MCF 10A (cell line): ENCODE measurements at regions of chrX and their contacts with region 1.

Region 1: GRCh38 chrX:132740316-132741123 is 217.9 kb downstream of the HS6ST2 start:
- DNase-seq: peak; percentile 28
- H3K4me3 Mint-ChIP-seq: no peak overlapping the region
- H3K27ac Mint-ChIP-seq: no peak overlapping the region
- H3K4me1 Mint-ChIP-seq: peaks cover 6% of the 10 kb centered on the region
- H3K27me3 Mint-ChIP-seq: peaks cover 63% of the 10 kb centered on the region
- CTCF ChIP-seq: peak; percentile 83

Region 2: DNA sequence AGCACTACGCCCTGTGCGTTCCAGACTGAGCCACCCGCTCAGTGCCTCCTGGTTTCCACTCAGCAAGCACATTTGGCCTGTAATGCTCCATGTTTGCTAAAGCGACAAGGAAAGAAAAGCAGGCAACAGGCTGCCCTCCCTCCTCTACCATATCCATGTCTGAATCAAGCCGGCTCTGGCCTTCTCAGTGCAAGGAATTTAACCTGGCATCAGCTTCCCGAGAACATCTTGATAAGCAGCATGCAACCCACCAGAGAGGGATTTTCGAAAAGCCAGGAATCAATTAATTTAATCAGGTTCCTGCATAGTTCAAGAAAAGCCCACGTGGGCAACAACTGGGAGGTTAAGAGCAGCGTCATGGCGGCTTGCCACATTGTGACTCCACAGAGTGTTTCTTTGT is 10.3 kb before region 1 on chrX:
- CTCF ChIA-PET with region 1: interaction called, 14 read pairs
- POLR2A ChIA-PET with region 1: interaction called, 3 read pairs
- intact Hi-C with region 1: no loop called
- DNase-seq: no peak
- H3K4me3 Mint-ChIP-seq: no peak overlapping the region
- H3K27ac Mint-ChIP-seq: no peak overlapping the region
- H3K4me1 Mint-ChIP-seq: no peaks in the 10 kb centered on the region
- H3K27me3 Mint-ChIP-seq: peaks cover 55% of the 10 kb centered on the region
- CTCF ChIP-seq: no peak

Region 3: DNA sequence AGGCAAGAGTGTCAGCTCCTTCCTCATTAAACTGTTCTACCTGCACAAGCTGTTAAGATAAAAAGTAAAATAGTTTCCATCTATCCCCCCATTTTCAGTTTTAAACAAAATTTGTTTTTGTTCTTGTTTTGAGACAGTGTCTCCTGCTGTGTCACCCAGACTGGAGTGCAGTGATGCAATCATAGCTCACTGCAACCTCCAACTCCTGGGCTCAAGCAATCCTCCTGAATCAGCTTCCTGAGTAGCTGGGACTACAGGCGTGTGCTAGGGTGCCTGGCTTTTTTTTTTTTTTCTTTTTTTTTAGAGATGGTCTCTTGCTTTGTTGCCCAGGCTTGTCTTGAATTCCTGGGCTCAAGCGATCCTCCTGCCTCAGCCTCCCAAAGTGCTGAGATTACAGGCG is 112.5 kb after region 1 on chrX:
- CTCF ChIA-PET with region 1: no interaction called
- POLR2A ChIA-PET with region 1: no interaction called
- intact Hi-C with region 1: no loop called
- DNase-seq: peak; percentile 72
- H3K4me3 Mint-ChIP-seq: no peak overlapping the region
- H3K27ac Mint-ChIP-seq: peak overlapping the region; percentile 80
- H3K4me1 Mint-ChIP-seq: peaks cover 6% of the 10 kb centered on the region
- H3K27me3 Mint-ChIP-seq: peaks cover 52% of the 10 kb centered on the region
- CTCF ChIP-seq: no peak

Region 4: DNA sequence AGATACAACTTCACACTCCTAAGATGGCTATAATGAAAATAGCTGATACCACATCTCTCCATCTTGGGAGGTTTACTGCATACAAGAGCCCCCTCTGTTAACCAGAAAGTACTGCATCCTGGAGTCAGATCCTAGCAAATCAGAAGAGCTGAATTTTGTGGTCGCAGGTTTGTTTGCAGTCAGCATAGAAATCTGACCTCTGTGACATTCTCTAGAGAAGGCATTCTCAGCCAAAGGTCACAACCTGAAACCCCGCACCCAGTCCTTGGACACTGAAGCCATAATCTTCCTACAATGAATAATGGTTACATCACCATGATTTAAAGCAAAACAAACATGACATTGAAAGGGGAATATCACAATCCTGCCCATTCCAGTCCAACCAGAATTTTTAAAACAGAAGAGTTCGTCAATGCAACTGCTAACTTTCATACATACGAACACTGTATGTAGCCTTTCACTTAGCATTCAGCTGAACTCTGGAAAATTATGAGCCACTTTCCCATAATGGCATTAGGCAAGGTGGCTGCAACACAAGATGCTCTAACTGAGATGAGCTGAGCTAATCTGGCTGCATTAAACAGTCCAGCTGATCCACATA is 200.3 kb after region 1 on chrX:
- CTCF ChIA-PET with region 1: interaction called, 4 read pairs
- POLR2A ChIA-PET with region 1: no interaction called
- intact Hi-C with region 1: loop called (anchors 2 kb)
- DNase-seq: peak; percentile 19
- H3K4me3 Mint-ChIP-seq: no peak overlapping the region
- H3K27ac Mint-ChIP-seq: no peak overlapping the region
- H3K4me1 Mint-ChIP-seq: peaks cover 9% of the 10 kb centered on the region
- H3K27me3 Mint-ChIP-seq: no peaks in the 10 kb centered on the region
- CTCF ChIP-seq: peak; percentile 22

Region 5: GRCh38 chrX:133005066-133005465 is 264.5 kb after region 1 on chrX:
- CTCF ChIA-PET with region 1: interaction called, 4 read pairs
- POLR2A ChIA-PET with region 1: no interaction called
- intact Hi-C with region 1: loop called (anchors 1 kb)
- DNase-seq: peak; percentile 30
- H3K4me3 Mint-ChIP-seq: no peak overlapping the region
- H3K27ac Mint-ChIP-seq: no peak overlapping the region
- H3K4me1 Mint-ChIP-seq: no peaks in the 10 kb centered on the region
- H3K27me3 Mint-ChIP-seq: peaks cover 53% of the 10 kb centered on the region
- CTCF ChIP-seq: peak; percentile 57

Region 6: GRCh38 chrX:133670383-133670782 is 929.9 kb after region 1 on chrX:
- CTCF ChIA-PET with region 1: interaction called, 3 read pairs
- POLR2A ChIA-PET with region 1: no interaction called
- intact Hi-C with region 1: loop called (anchors 10 kb)
- DNase-seq: peak; percentile 57
- H3K4me3 Mint-ChIP-seq: no peak overlapping the region
- H3K27ac Mint-ChIP-seq: no peak overlapping the region
- H3K4me1 Mint-ChIP-seq: no peaks in the 10 kb centered on the region
- H3K27me3 Mint-ChIP-seq: peaks cover 48% of the 10 kb centered on the region
- CTCF ChIP-seq: peak; percentile 79